Common myeloid progenitor, CD34-positive (primary cell): ENCODE measurements at regions of chr16 and their contacts with region 1.

Region 1: GRCh38 chr16:75110637-75111513 is 5.7 kb downstream of the LDHD start:
- DNase-seq: peak; percentile 86 to 91 (median 91)
- H3K4me3 ChIP-seq: peak overlapping the region in 3 of 7 experiments; percentile 8 to 59 (median 43)
- H3K27ac ChIP-seq: peak overlapping the region; percentile 20 to 61
- H3K4me1 ChIP-seq: peaks cover 5 to 90% (median 83%) of the 10 kb centered on the region in 4 experiments
- H3K27me3 ChIP-seq: no peaks in the 10 kb centered on the region

Region 2: DNA sequence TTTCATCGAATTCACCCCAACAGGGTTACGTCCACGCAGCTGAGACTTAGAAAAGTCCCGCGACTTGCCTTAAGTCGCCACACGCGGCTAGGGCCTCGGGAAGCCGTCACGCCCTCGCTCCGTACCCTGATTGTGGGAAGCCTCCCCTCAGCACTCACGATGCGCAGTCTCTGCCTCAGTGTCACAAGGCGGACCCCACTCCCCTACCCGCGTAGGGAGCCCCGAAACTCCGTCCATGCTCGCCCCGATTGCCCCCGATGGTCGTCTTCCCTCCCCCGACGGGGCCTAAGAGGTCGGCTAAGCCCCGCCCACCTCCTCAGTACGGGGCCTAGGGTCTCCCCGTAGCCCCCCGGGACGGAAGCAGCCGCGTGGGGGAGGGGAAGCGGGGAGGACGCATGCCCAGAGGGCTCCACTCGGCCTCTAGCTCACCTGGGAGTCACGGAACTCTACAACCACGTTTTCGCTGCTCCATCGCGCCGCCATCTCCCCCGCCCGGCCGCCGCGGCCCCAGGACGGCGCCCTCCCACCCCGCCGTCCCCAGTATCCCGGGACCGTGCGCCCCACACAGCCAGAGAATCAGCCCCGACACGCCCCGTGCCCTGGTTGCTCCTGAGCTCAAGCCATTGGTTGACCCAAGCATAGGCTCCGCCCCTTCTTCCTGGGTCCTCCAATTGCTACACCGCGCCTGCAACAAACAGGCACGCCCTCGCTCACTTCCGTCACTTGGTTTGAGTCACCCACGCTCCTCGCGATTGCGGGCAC is 126.2 kb before region 1 on chr16 and contains the start of gene WDR59:
- CTCF ChIA-PET with region 1: interaction called, 12 read pairs
- POLR2A ChIA-PET with region 1: no interaction called
- DNase-seq: peak; percentile 100
- H3K4me3 ChIP-seq: peak within 1 kb of the TSS; percentile 74 to 98 (median 95)
- H3K27ac ChIP-seq: peak within 1 kb of the TSS; percentile 33 to 81
- H3K4me1 ChIP-seq: peaks cover 0 to 17% (median 9%) of the 10 kb centered on the region in 4 experiments
- H3K27me3 ChIP-seq: no peaks in the 10 kb centered on the region

Region 3: DNA sequence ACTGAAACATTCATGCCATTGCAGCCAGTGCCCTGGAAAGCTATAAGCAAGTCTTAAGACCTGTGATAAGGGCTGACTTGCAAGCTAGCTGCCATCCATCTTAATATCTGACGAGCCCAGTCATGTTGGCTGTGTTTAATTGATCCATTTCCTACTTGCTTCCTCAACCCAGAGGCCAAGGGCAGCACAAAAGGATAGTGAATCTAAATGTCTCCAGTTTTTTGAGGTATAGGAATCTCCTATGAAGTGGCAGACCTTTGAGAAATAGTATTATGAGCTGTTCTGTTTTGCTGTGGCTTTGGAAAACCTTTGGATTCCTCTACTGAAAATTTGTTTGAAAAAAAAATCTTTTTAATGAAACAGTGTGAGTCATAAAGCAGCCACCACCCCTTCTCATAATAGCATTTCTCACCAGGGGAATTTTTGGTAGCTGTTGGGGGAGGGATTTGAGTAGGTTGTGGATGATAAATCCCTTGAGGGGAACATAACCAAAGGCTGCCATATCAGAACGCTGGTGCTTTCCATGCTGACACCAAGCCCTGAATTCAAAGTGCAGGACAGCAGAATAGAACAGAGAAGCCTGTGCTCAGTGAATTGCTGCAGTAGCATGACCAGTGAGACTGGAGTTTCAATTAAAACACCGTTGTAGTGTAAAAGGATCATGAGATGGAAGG is 99.1 kb before region 1 on chr16:
- CTCF ChIA-PET with region 1: interaction called, 67 read pairs
- POLR2A ChIA-PET with region 1: interaction called, 3 read pairs
- DNase-seq: peak; percentile 63 to 92 (median 92)
- H3K4me3 ChIP-seq: peak overlapping the region in 3 of 7 experiments; percentile 6 to 17 (median 11)
- H3K27ac ChIP-seq: peak overlapping the region; percentile 46 to 71
- H3K4me1 ChIP-seq: peaks cover 16 to 49% (median 40%) of the 10 kb centered on the region in 4 experiments
- H3K27me3 ChIP-seq: no peaks in the 10 kb centered on the region

Region 4: GRCh38 chr16:75064403-75065148 is 46.3 kb before region 1 on chr16:
- CTCF ChIA-PET with region 1: interaction called, 82 read pairs
- POLR2A ChIA-PET with region 1: interaction called, 42 read pairs
- DNase-seq: peak; percentile 83 to 89 (median 88)
- H3K4me3 ChIP-seq: peak overlapping the region in 6 of 7 experiments; percentile 9 to 66 (median 50)
- H3K27ac ChIP-seq: peak overlapping the region; percentile 62 to 84
- H3K4me1 ChIP-seq: peaks cover 39 to 99% (median 96%) of the 10 kb centered on the region in 4 experiments
- H3K27me3 ChIP-seq: no peaks in the 10 kb centered on the region

Region 5: GRCh38 chr16:75087375-75087979 is 23.4 kb before region 1 on chr16:
- CTCF ChIA-PET with region 1: interaction called, 62 read pairs
- POLR2A ChIA-PET with region 1: no interaction called
- DNase-seq: peak in 2 of 3 donors; percentile 79 to 87
- H3K4me3 ChIP-seq: peak overlapping the region in 4 of 7 experiments; percentile 17 to 58 (median 34)
- H3K27ac ChIP-seq: peak overlapping the region; percentile 11 to 73
- H3K4me1 ChIP-seq: peaks cover 16 to 91% (median 66%) of the 10 kb centered on the region in 4 experiments
- H3K27me3 ChIP-seq: no peaks in the 10 kb centered on the region

Region 6: DNA sequence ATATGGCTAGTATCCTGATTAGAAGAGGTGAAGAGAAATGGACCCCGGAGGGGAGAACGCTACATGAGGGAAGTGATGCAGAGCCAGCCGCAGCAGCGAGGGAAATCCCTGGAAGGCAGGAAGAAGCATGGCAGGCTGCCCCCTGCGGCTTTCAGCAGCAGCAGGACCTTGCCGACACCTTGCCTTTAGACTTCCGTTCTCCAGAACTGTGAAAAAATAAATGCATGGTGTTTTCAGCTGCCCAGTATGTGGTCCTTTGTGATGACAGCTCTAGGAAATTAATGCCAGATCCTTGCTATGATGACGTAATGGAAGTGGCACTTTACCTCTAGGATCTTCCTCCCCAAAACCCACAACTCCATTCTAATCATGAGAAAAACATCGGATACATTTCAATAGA is 27.8 kb after region 1 on chr16:
- CTCF ChIA-PET with region 1: interaction called, 10 read pairs
- POLR2A ChIA-PET with region 1: no interaction called
- DNase-seq: peak in 2 of 3 donors; percentile 90 to 91
- H3K4me3 ChIP-seq: peak overlapping the region in 5 of 7 experiments; percentile 4 to 45 (median 26)
- H3K27ac ChIP-seq: no peak overlapping the region
- H3K4me1 ChIP-seq: peaks cover 0 to 10% (median 5%) of the 10 kb centered on the region in 4 experiments
- H3K27me3 ChIP-seq: no peaks in the 10 kb centered on the region

Region 7: GRCh38 chr16:75188832-75189510 is 78.1 kb after region 1 on chr16:
- CTCF ChIA-PET with region 1: no interaction called
- POLR2A ChIA-PET with region 1: no interaction called
- DNase-seq: no peak
- H3K4me3 ChIP-seq: no peak overlapping the region
- H3K27ac ChIP-seq: no peak overlapping the region
- H3K4me1 ChIP-seq: no peaks in the 10 kb centered on the region
- H3K27me3 ChIP-seq: peaks cover 0 to 36% (median 5%) of the 10 kb centered on the region in 5 experiments